ENCODE measurements at regions of chr16 and their contacts with region 1.

Region 1: GRCh38 chr16:26913851-26914250 is 152.9 kb upstream of the C16orf82 start:
- DNase-seq: no peak
- H3K4me3 ChIP-seq: no peak overlapping the region
- H3K4me3 Mint-ChIP-seq: no peak overlapping the region
- H3K27ac ChIP-seq: no peak overlapping the region
- H3K27ac Mint-ChIP-seq: no peak overlapping the region
- H3K4me1 ChIP-seq: no peaks in the 10 kb centered on the region
- H3K4me1 Mint-ChIP-seq: no peaks in the 10 kb centered on the region
- H3K27me3 ChIP-seq: no peaks in the 10 kb centered on the region
- H3K27me3 Mint-ChIP-seq: peaks cover 1 to 7% (median 3%) of the 10 kb centered on the region in 3 donors
- CTCF ChIP-seq: no peak

Region 2: DNA sequence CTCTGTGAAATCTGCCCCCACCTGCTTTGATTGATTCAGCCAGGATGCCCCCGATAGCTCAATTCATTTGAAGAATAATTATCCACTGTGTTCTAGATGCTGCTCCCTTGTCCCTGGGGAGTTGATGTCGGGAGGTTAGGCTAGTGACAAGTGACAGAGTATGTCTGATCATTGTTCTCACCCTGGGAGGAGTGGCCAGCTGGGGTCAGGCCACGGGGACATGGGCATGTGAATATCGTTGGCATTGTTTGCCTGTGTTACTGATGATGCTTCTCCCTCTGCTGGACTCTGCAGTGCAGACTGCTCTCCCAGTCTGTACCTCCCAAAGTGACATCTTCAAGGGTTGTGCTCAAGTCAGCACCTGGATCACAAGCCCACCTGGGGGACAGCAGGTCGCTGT is 63.0 kb after region 1 on chr16:
- intact Hi-C with region 1: loop called in 1 of 2 experiments (anchors 10 kb)
- DNase-seq: no peak
- H3K4me3 ChIP-seq: no peak overlapping the region
- H3K4me3 Mint-ChIP-seq: no peak overlapping the region
- H3K27ac ChIP-seq: no peak overlapping the region
- H3K27ac Mint-ChIP-seq: peak overlapping the region in 1 of 7 donors; percentile 16
- H3K4me1 ChIP-seq: no peaks in the 10 kb centered on the region
- H3K4me1 Mint-ChIP-seq: no peaks in the 10 kb centered on the region
- H3K27me3 ChIP-seq: no peaks in the 10 kb centered on the region
- H3K27me3 Mint-ChIP-seq: peaks cover 3 to 7% (median 5%) of the 10 kb centered on the region in 3 donors
- CTCF ChIP-seq: no peak

Region 3: GRCh38 chr16:27052007-27052406 is 138.2 kb after region 1 on chr16:
- intact Hi-C with region 1: no loop called
- DNase-seq: no peak
- H3K4me3 ChIP-seq: no peak overlapping the region
- H3K4me3 Mint-ChIP-seq: no peak overlapping the region
- H3K27ac ChIP-seq: no peak overlapping the region
- H3K27ac Mint-ChIP-seq: no peak overlapping the region
- H3K4me1 ChIP-seq: no peaks in the 10 kb centered on the region
- H3K4me1 Mint-ChIP-seq: no peaks in the 10 kb centered on the region
- H3K27me3 ChIP-seq: no peaks in the 10 kb centered on the region
- H3K27me3 Mint-ChIP-seq: peaks cover 0 to 2% (median 0%) of the 10 kb centered on the region in 3 donors
- CTCF ChIP-seq: no peak